ENCODE measurements at regions of chr10 and their contacts with region 1.

Region 1: DNA sequence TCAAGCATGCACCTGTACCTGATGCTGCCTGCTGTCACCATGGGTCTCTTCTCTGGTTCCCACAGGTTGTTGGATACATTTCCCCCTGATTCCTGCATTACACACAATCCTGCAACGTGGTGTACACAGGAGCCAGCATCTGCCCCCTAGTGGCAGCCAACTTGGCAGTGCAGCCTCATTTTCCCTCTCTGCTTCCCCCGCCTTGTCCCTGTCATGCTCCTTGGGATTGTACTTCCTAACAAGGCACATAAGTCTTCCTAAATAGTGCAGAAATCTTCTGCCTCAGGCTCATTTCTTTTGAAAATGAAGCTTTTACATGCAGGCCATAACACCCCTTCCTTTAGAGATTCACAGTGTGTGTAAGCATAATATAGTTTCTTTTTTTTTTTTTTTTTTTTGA is 387.5 kb downstream of the CCSER2 start:
- DNase-seq: peak; percentile 34 to 76
- H3K4me3 ChIP-seq: no peak overlapping the region
- H3K27ac ChIP-seq: no peak overlapping the region
- H3K4me1 ChIP-seq: no peaks in the 10 kb centered on the region
- H3K27me3 ChIP-seq: no peaks in the 10 kb centered on the region
- CTCF ChIP-seq: peak; percentile 93 to 100 (median 99)
- EP300 ChIP-seq: no peak
- POLR2A ChIP-seq: no peak
- RAD21 ChIP-seq: peak; percentile 77 to 78

Region 2: DNA sequence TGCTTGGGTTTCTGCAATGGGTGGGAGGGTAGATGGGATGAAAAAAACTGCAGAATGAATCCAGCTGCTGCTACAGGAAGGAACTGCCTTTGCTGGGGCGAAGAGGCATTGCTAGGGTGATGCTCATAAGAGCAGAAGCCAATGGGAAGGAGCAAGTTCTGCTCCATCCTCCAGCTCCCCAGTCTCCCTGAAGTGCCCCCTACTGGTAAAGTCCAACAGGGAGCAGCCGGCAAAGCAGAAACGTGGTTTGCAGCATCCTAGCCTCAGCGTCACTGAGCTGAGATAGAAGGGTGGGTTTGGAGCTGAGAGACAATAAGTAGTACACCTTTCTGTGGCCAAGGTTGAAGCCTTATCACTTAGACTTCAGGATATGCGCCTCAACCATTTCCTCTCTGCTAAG is 167.0 kb before region 1 on chr10:
- CTCF ChIA-PET with region 1: interaction called, 11 read pairs
- POLR2A ChIA-PET with region 1: no interaction called
- DNase-seq: peak in 1 of 2 experiments; percentile 63
- H3K4me3 ChIP-seq: no peak overlapping the region
- H3K27ac ChIP-seq: no peak overlapping the region
- H3K4me1 ChIP-seq: no peaks in the 10 kb centered on the region
- H3K27me3 ChIP-seq: no peaks in the 10 kb centered on the region
- CTCF ChIP-seq: peak; percentile 69 to 94 (median 86)
- EP300 ChIP-seq: no peak
- POLR2A ChIP-seq: no peak
- RAD21 ChIP-seq: peak; percentile 44 to 50

Region 3: DNA sequence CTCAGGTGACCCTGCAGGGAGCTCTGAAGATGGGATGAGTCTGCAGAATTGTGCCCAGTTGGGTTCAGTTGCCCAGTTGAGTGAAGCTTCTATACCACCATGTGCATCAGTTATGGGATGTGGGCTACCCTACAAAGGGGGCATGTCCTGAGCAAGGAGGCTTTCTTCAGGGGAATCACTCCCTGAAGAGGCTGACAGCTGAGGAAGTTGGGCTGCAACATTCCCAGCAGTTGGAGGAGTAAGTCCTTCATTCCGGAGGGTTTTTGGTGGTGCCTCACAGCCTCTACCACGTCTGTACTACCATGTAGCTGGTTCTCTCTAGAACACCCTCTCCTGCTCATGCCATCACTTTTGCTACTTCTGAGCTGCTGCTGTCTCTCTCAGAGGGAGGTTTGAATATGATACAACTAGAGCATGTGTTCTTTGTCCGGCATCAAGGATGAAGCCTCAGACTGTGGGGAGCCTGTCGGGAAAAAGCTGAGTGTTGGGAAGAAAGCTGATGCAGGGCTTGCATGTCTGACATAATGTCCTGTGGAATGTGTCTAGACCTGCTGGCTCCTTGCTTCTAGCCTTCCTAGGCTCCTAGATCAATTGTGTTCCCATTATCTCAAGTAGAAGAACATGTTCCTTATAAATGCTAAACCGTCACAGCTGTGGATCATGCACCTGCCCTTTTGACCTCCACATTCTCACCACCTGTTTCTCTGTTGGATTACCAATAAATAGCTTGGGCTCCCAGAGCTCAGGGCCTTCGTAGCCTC is 31.8 kb before region 1 on chr10:
- CTCF ChIA-PET with region 1: interaction called, 14 read pairs
- POLR2A ChIA-PET with region 1: no interaction called
- DNase-seq: no peak
- H3K4me3 ChIP-seq: no peak overlapping the region
- H3K27ac ChIP-seq: no peak overlapping the region
- H3K4me1 ChIP-seq: no peaks in the 10 kb centered on the region
- H3K27me3 ChIP-seq: no peaks in the 10 kb centered on the region
- CTCF ChIP-seq: no peak
- EP300 ChIP-seq: no peak
- POLR2A ChIP-seq: no peak
- RAD21 ChIP-seq: no peak

Region 4: GRCh38 chr10:84700668-84701369 is 15.1 kb before region 1 on chr10:
- CTCF ChIA-PET with region 1: interaction called, 16 read pairs
- POLR2A ChIA-PET with region 1: no interaction called
- DNase-seq: no peak
- H3K4me3 ChIP-seq: no peak overlapping the region
- H3K27ac ChIP-seq: no peak overlapping the region
- H3K4me1 ChIP-seq: no peaks in the 10 kb centered on the region
- H3K27me3 ChIP-seq: no peaks in the 10 kb centered on the region
- CTCF ChIP-seq: no peak
- EP300 ChIP-seq: no peak
- POLR2A ChIP-seq: no peak
- RAD21 ChIP-seq: no peak

Region 5: GRCh38 chr10:84743483-84743882 is 27.6 kb after region 1 on chr10:
- CTCF ChIA-PET with region 1: interaction called, 14 read pairs
- POLR2A ChIA-PET with region 1: no interaction called
- DNase-seq: no peak
- H3K4me3 ChIP-seq: no peak overlapping the region
- H3K27ac ChIP-seq: no peak overlapping the region
- H3K4me1 ChIP-seq: no peaks in the 10 kb centered on the region
- H3K27me3 ChIP-seq: no peaks in the 10 kb centered on the region
- CTCF ChIP-seq: peak in 2 of 3 experiments; percentile 57 to 60; a peak in 3 of 4 replicates
- EP300 ChIP-seq: no peak
- POLR2A ChIP-seq: no peak
- RAD21 ChIP-seq: peak; percentile 46 to 51

Measured in H1 (cell line).